ENCODE measurements at regions of chr9 and their contacts with region 1.

Region 1: GRCh38 chr9:89999534-90000370 is 394.9 kb downstream of the GADD45G start:
- DNase-seq: peak; percentile 88
- H3K4me3 ChIP-seq: peak overlapping the region in 3 of 4 donors; percentile 15 to 36 (median 28)
- H3K27ac ChIP-seq: peak overlapping the region; percentile 78 to 87 (median 84)
- H3K4me1 ChIP-seq: peaks cover 0 to 70% (median 59%) of the 10 kb centered on the region in 4 donors
- H3K27me3 ChIP-seq: no peaks in the 10 kb centered on the region
- CTCF ChIP-seq: no peak
- EP300 ChIP-seq: peak in 1 of 4 donors; percentile 73
- POLR2A ChIP-seq: no peak

Region 2: DNA sequence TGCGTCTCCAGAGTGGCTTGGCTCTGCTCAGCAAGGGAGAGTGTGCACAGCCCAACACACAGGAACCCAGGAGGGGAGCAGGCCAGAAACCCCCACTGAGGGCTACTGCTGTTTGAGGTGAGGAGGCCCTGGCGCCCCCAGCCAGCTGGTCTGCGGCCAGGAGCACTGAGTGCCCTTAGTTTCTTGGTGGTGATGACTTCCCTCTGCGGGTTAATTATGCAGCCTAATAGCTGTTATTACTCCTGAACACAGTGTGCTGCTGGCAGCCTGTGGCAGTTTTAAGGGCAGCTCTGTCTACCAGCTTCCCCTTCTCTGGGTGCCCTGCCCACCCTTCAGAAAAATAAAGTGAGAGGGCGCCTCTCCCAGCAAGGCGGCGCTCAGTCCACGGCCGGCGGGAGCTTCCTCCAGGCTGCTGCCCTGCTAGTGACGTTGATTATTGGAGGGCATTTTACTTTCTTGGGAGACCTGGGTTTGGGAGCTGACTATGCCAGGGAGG is 375.8 kb before region 1 on chr9:
- intact Hi-C with region 1: loop called (anchors 5 kb)
- DNase-seq: peak; percentile 88
- H3K4me3 ChIP-seq: no peak overlapping the region
- H3K27ac ChIP-seq: peak overlapping the region; percentile 82 to 88 (median 85)
- H3K4me1 ChIP-seq: peaks cover 0 to 72% (median 48%) of the 10 kb centered on the region in 4 donors
- H3K27me3 ChIP-seq: no peaks in the 10 kb centered on the region
- CTCF ChIP-seq: peak in 1 of 4 experiments; percentile 20
- EP300 ChIP-seq: no peak
- POLR2A ChIP-seq: no peak

Region 3: DNA sequence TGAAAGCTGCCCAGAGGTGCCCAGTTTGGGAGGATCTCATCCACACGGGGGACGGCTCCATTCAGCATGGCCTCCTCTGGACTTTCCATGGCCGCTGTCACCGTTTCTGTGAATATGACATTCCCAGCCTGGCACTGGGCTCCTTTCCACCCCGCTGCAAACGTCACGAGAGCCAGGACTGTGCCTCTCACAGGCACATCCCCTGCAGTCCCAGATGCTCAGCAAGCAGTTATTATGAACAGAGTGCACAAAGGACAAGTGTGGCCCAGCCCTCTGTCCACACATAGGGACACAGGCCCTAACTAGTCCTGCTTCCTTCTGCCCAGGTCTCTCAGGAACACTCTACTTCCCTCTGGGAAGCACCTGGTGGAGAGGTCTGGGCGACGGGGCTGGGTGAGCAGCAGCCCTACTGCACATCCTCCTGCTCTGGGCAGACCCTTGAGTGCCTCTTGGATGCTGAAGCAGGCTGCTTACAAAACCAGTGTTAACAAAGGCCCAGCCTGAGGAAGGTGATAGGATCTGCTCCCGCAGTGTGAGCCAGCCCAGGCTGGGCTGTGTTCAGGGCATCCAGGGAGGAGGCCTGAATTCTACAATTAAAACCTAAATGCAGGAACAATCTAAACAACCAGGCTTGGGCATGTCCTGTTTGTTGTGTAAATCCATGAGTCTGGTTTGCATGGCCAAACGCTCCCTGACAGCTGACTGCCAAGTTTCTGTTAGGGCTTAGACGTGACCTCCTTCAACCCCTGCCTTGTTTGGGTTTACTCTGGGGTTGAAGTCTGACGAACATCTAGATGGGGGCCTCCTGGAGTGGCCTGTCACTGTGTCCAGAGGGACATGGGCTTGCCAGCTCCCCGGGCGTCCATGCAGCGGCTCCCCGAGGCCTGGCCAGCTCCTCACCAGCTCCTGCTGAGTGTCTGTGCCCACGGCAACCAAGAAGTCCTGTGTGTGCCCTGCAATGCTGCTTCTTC is 125.1 kb before region 1 on chr9:
- intact Hi-C with region 1: loop called (anchors 5 kb)
- DNase-seq: peak; percentile 72
- H3K4me3 ChIP-seq: no peak overlapping the region
- H3K27ac ChIP-seq: peak overlapping the region; percentile 48 to 71 (median 64)
- H3K4me1 ChIP-seq: peaks cover 0 to 80% (median 51%) of the 10 kb centered on the region in 4 donors
- H3K27me3 ChIP-seq: no peaks in the 10 kb centered on the region
- CTCF ChIP-seq: no peak
- EP300 ChIP-seq: no peak
- POLR2A ChIP-seq: no peak

Region 4: GRCh38 chr9:89891591-89892304 is 108.0 kb before region 1 on chr9:
- intact Hi-C with region 1: loop called (anchors 5 kb)
- DNase-seq: peak; percentile 95
- H3K4me3 ChIP-seq: no peak overlapping the region
- H3K27ac ChIP-seq: peak overlapping the region; percentile 81 to 86 (median 82)
- H3K4me1 ChIP-seq: peaks cover 0 to 35% (median 28%) of the 10 kb centered on the region in 4 donors
- H3K27me3 ChIP-seq: no peaks in the 10 kb centered on the region
- CTCF ChIP-seq: no peak
- EP300 ChIP-seq: peak in 3 of 4 donors; percentile 88 to 92 (median 90)
- POLR2A ChIP-seq: no peak

Region 5: GRCh38 chr9:90102292-90102901 is 102.6 kb after region 1 on chr9:
- intact Hi-C with region 1: loop called (anchors 5 kb)
- DNase-seq: peak; percentile 94
- H3K4me3 ChIP-seq: no peak overlapping the region
- H3K27ac ChIP-seq: no peak overlapping the region
- H3K4me1 ChIP-seq: peaks cover 0 to 22% (median 10%) of the 10 kb centered on the region in 4 donors
- H3K27me3 ChIP-seq: no peaks in the 10 kb centered on the region
- CTCF ChIP-seq: peak; percentile 72 to 93 (median 88)
- EP300 ChIP-seq: no peak
- POLR2A ChIP-seq: no peak